ENCODE measurements at regions of chr2 and their contacts with region 1.

Region 1: DNA sequence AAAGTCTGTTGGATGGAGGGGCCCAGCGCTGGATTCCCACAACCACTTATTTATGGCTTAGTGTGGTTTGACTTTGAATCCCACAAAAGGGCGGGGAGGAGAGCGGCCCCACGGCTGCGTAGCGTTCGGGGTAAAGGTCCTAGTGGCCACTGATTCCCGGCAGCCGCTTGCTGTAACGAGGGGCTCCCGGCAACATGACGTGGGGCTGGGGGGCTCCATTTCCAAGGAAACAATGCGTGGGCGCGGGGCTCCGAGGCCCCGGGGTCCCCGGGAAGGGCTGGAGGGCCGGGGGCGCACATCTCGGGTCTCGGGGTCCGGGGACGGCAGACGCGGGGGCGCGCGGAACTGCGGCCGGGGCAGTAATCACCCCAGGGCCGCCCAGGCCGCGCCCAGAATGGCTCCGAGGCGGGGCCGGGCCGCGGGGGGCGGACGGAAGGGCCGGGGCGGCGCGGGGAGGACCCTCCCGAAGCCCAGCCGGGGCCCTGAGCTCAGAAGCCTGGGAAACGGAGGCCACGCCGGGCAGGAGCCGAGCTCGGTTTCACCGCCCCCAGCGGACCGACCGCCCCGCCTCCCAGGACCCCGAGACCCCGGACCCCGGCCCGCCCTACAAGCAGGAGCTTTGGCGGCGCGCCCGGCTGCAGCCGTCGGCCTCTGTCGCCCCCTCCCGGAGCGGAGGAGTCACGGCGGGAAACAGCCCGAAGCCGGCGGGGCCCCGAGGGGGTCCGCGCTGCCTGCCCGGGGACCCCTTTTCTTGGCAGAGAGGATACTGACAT is 11.9 kb upstream of the MLPH start:
- DNase-seq: peak; percentile 90 to 95 (median 93)
- H3K4me3 ChIP-seq: peak overlapping the region; percentile 62
- H3K27ac ChIP-seq: peak overlapping the region; percentile 90 to 92
- H3K4me1 ChIP-seq: peaks cover 13% of the 10 kb centered on the region
- H3K27me3 ChIP-seq: no peaks in the 10 kb centered on the region
- CTCF ChIP-seq: peak; percentile 95 to 97 (median 97)
- EP300 ChIP-seq: no peak
- POLR2A ChIP-seq: no peak

Region 2: DNA sequence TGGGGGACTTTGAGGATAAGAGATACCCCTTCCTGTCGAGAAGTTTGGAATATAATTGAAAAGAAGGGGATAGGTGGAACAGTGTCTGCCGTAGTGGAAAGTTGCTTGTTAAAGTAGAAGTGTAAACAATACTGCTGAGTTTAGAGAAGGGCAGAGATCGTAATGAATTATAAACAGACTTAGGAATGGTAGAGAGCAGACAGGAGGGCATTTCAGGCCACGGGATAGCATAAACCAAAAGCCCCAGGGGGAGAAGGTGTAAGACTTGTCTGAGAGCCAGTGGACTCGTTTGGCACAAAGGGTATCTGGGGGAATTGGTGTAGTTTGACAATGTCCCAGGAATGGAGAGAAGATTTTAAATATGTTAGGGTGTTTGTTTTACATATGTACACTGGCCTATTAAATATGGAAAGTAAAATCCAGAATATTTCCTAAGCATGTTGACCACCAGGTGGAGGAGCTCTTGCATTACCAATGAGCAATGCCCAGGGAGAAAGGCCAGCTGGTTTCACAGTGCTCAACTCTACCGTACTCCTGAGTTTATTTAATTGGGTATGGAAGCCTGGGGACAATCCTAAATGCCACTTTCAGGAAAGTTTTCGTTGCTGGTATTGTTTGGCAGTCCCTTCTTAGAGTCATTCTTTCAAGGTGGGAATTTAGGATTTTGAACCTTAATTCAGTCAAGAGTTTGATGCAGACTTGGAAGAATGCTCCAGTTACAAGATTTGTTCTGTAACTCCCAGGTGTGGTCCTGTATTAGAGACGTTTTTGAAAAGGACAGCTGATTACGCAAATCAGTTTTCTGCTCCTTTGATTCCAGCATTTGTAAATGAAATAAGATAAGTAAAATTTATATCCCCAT is 382.0 kb before region 1 on chr2:
- intact Hi-C with region 1: loop called in 2 of 4 experiments (anchors 5 to 10 kb)
- DNase-seq: peak in 4 of 5 donors; percentile 49 to 65 (median 58)
- H3K4me3 ChIP-seq: no peak overlapping the region
- H3K27ac ChIP-seq: no peak overlapping the region
- H3K4me1 ChIP-seq: peaks cover 6% of the 10 kb centered on the region
- H3K27me3 ChIP-seq: no peaks in the 10 kb centered on the region
- CTCF ChIP-seq: peak; percentile 47 to 83 (median 55)
- EP300 ChIP-seq: no peak
- POLR2A ChIP-seq: no peak

Region 3: GRCh38 chr2:237154082-237154638 is 321.0 kb before region 1 on chr2:
- intact Hi-C with region 1: loop called (anchors 2 to 10 kb)
- DNase-seq: peak in 4 of 5 donors; percentile 42 to 63 (median 54)
- H3K4me3 ChIP-seq: no peak overlapping the region
- H3K27ac ChIP-seq: no peak overlapping the region
- H3K4me1 ChIP-seq: peaks cover 5% of the 10 kb centered on the region
- H3K27me3 ChIP-seq: no peaks in the 10 kb centered on the region
- CTCF ChIP-seq: peak; percentile 27 to 78 (median 65)
- EP300 ChIP-seq: no peak
- POLR2A ChIP-seq: no peak

Region 4: DNA sequence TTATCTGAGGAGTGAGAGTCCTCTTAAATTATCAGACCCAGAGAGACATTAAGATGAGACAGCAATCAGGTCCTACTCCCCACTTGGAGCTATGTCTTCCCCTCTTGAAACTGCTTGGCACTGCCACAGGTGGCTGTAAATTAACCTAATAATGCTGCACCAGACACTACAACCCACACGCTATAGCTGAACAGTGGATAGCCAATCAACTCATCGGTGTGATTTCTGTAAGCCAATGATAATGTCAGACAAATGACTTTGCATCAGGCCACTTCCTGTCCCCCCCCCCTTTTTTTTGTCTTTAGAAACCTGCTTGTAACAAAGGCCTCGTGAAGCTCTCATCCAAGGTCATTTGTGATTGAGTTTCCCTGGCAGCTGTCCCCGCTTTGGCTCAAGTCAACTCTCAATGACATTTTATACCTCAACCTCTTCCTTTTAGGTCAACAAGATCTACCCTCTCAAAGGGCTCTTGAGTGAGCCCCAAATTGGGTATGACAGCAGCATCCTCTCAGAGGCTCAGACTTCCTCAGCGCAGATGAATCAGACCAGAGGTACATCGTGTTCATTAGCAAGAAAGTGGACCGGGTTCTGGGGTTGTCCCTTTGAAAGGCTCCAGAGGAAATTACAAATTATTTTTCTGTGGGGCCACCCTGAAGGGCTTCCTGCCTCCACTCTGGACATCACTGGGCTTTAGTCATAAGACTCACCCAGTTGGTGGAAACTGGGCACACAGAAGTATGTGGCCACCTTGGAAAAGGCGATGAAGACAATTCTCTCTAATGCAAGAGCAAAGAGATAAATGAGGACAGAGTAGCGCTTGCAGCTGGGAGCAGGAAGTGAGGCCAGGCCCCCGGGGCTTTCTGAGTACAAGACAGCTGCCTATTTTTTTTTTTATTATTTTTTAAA is 315.9 kb before region 1 on chr2:
- intact Hi-C with region 1: loop called (anchors 2 to 10 kb)
- DNase-seq: no peak
- H3K4me3 ChIP-seq: no peak overlapping the region
- H3K27ac ChIP-seq: no peak overlapping the region
- H3K4me1 ChIP-seq: peaks cover 5% of the 10 kb centered on the region
- H3K27me3 ChIP-seq: no peaks in the 10 kb centered on the region
- CTCF ChIP-seq: no peak
- EP300 ChIP-seq: no peak
- POLR2A ChIP-seq: no peak

Region 5: DNA sequence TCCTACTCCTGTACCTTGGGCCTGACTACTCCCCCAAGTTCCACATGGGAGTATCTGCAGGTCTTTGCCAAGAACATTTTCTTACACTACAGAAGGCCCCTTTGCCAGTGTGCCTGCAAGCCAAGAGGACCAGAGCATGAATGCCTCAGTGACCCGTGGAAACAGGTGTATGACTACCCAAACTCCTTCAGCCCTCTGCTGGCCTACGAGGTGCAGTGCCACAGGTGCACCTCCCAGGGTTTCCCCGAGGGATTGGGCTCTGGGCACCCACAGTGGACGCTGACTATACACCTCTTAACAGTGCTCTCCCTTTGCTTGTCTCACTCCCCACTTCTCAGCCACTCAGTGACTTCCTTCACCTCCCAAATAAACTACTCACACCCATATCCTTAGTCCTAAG is 152.6 kb before region 1 on chr2:
- intact Hi-C with region 1: loop called in 1 of 4 experiments (anchors 10 kb)
- DNase-seq: no peak
- H3K4me3 ChIP-seq: no peak overlapping the region
- H3K27ac ChIP-seq: peak overlapping the region; percentile 70 to 72
- H3K4me1 ChIP-seq: peaks cover 37% of the 10 kb centered on the region
- H3K27me3 ChIP-seq: no peaks in the 10 kb centered on the region
- CTCF ChIP-seq: no peak
- EP300 ChIP-seq: no peak
- POLR2A ChIP-seq: no peak

Region 6: GRCh38 chr2:237421542-237422116 is 53.5 kb before region 1 on chr2:
- intact Hi-C with region 1: loop called in 2 of 4 experiments (anchors 5 to 10 kb)
- DNase-seq: peak; percentile 68 to 86 (median 80)
- H3K4me3 ChIP-seq: no peak overlapping the region
- H3K27ac ChIP-seq: peak overlapping the region in 1 of 2 donors; percentile 49
- H3K4me1 ChIP-seq: peaks cover 9% of the 10 kb centered on the region
- H3K27me3 ChIP-seq: no peaks in the 10 kb centered on the region
- CTCF ChIP-seq: peak; percentile 69 to 78 (median 70)
- EP300 ChIP-seq: no peak
- POLR2A ChIP-seq: no peak

Measured in ovary (tissue), 10 donors.